Dendritic cell treated with granulocyte-macrophage colony-stimulating factor and Interleukin-4, amounts not matched to agents 40 ng/mL and 50 ng/mL, for 4 days (primary cell): ENCODE measurements at regions of chr17 and their contacts with region 1.

Region 1: DNA sequence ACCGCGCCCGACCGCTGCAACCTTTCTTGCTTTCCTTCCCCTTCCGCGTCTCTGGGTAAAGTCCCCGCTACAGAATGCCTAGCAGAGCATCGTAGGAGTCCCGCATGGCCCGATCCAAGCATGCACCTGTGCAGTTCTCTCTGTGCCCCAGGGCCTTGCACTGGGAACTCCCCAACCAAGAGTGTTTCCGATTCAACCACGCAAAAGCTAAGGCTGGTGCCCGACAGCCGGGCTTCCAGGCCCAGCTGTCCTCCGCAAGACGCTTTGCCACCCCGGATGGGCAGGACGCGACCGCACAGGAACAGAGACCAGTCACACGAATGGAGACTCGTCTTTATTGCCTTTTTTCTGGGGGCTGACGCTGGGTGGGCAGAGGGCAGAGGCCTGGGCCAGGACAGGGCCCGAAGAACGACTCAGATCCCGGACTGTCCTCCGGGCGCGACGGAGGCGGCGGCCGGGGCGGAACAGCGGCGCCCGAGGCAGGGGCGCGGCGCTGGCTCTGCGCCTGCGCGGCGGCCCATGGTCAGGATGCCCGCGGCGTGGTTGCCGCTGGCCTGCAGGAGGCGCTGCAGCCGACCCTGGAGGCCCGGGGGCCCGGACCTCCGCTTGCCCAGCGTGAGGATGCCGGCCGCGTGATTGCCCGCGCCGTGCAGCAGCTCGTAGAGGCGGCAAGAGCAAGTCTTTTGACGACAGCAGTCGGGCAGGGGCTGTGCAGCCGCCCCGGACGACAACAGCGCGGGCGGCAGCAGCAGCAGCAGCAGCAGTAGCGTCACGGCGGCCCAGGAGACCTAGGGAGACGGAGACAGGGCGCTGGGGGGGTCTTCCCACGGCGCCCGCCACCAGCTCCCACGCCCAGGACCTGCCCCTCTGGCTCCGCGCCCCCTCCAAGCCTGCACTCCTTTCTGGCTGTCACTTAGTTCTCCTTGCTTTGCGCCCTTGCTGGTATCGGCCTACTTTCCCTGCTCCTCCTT is 1.2 kb downstream of the HCRT start:
- H3K4me3 Mint-ChIP-seq: peak overlapping the region; percentile 81
- H3K27ac Mint-ChIP-seq: peak overlapping the region; percentile 96
- H3K4me1 Mint-ChIP-seq: peaks cover 95% of the 10 kb centered on the region
- H3K27me3 Mint-ChIP-seq: peaks cover 25% of the 10 kb centered on the region

Region 2: GRCh38 chr17:42118545-42118944 is 65.5 kb before region 1 on chr17:
- intact Hi-C with region 1: loop called (anchors 2 kb)
- H3K4me3 Mint-ChIP-seq: no peak overlapping the region
- H3K27ac Mint-ChIP-seq: no peak overlapping the region
- H3K4me1 Mint-ChIP-seq: peaks cover 54% of the 10 kb centered on the region
- H3K27me3 Mint-ChIP-seq: no peaks in the 10 kb centered on the region

Region 3: GRCh38 chr17:42155636-42156045 is 28.4 kb before region 1 on chr17:
- intact Hi-C with region 1: loop called (anchors 1 kb)
- H3K4me3 Mint-ChIP-seq: peak overlapping the region; percentile 78
- H3K27ac Mint-ChIP-seq: peak overlapping the region; percentile 94
- H3K4me1 Mint-ChIP-seq: peaks cover 44% of the 10 kb centered on the region
- H3K27me3 Mint-ChIP-seq: no peaks in the 10 kb centered on the region

Region 4: GRCh38 chr17:42198897-42199296 is 14.9 kb after region 1 on chr17:
- intact Hi-C with region 1: loop called (anchors 2 kb)
- H3K4me3 Mint-ChIP-seq: no peak overlapping the region
- H3K27ac Mint-ChIP-seq: peak overlapping the region; percentile 93
- H3K4me1 Mint-ChIP-seq: peaks cover 29% of the 10 kb centered on the region
- H3K27me3 Mint-ChIP-seq: no peaks in the 10 kb centered on the region

Region 5: DNA sequence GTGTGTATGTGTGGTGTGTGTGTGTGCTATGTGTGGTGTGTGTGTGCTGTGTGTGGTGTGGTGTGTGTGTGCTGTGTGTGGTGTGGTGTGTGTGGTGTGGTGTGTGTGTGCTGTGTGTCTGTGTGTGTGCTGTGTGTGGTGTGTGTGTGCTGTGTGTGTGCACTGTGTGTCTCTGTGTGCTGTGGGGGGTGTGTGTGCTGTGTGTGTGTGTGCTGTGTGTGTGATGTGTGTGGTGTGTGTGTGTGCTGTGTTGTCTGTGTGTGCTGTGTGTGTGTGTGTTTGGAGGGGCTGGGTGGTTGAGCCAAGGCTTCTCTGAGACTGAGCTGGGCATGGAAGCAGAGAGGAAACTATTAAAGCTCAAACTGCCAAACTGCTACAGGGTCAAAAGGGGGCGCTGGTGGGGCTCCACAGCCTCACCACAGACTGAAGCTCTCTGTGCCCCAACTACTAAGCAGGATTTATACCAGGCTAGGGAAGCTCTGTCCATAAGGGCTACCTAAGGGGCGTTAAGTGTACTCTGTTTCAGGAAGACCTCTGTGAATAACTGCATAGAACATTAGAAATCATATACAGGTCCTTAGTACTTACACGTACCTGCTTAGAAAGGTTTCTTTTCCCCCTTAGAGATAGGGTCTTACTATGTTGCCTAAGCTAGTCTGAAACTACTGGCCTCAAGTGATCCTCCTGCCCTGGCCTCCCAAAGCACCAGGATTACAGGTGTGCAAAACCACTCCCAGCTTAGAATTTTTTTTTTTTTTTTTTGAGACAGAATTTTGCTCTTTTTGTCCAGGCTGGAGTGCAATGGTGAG is 38.1 kb after region 1 on chr17:
- intact Hi-C with region 1: no loop called
- H3K4me3 Mint-ChIP-seq: no peak overlapping the region
- H3K27ac Mint-ChIP-seq: peak overlapping the region; percentile 43
- H3K4me1 Mint-ChIP-seq: no peaks in the 10 kb centered on the region
- H3K27me3 Mint-ChIP-seq: no peaks in the 10 kb centered on the region